Activated CD8-positive, alpha-beta T cell treated with anti-CD3 and anti-CD28 coated beads for 36 hours (primary cell): ENCODE measurements at regions of chr11 and their contacts with region 1.

Region 1: DNA sequence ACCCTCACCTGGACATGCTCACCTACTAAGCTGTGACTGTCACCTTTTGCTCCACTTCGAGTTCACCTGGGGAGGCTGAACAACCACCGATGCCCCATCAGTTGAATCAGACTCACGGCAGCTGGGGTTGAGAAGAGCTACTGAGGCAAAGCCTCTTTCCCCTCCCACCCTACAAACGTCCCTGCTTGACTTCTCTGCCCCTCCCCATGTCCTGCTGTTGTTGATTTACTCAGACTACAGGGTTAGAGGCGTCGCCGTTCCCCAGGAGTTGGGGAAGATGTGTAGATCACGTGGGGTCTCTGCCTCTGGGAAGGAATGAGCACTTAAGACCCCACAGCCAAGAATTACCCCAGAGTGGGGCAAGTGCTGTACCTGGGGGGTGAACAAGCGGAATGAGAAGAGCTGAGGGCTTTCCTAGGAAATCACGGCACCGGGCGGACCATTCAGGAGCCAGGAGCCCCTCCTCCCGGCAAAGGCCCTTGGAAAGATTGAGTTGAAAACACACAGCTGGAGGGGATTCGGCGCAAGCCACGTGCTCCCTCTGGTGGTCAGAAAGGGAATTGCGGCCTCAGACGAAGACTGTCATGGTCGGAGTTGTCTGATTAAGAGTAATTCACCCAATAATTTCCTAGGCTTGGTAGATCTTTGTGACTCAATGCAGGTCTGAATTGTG is 7.0 kb downstream of the FXYD2 start:
- DNase-seq: peak; percentile 94
- ATAC-seq: peak; percentile 53
- H3K4me3 Mint-ChIP-seq: peak overlapping the region; percentile 63
- H3K27ac Mint-ChIP-seq: peak overlapping the region; percentile 98
- H3K4me1 Mint-ChIP-seq: peaks cover 72% of the 10 kb centered on the region
- H3K27me3 Mint-ChIP-seq: no peaks in the 10 kb centered on the region
- CTCF ChIP-seq: peak; percentile 99

Region 2: GRCh38 chr11:117459781-117460261 is 357.7 kb before region 1 on chr11:
- CTCF ChIA-PET with region 1: no interaction called
- POLR2A ChIA-PET with region 1: no interaction called
- intact Hi-C with region 1: no loop called
- DNase-seq: no peak
- ATAC-seq: no peak
- H3K4me3 Mint-ChIP-seq: no peak overlapping the region
- H3K27ac Mint-ChIP-seq: no peak overlapping the region
- H3K4me1 Mint-ChIP-seq: peaks cover 10% of the 10 kb centered on the region
- H3K27me3 Mint-ChIP-seq: peaks cover 2% of the 10 kb centered on the region
- CTCF ChIP-seq: no peak

Region 3: GRCh38 chr11:117686711-117687110 is 130.8 kb before region 1 on chr11:
- CTCF ChIA-PET with region 1: no interaction called
- POLR2A ChIA-PET with region 1: no interaction called
- intact Hi-C with region 1: no loop called
- DNase-seq: no peak
- ATAC-seq: no peak
- H3K4me3 Mint-ChIP-seq: no peak overlapping the region
- H3K27ac Mint-ChIP-seq: no peak overlapping the region
- H3K4me1 Mint-ChIP-seq: no peaks in the 10 kb centered on the region
- H3K27me3 Mint-ChIP-seq: no peaks in the 10 kb centered on the region
- CTCF ChIP-seq: no peak

Region 4: DNA sequence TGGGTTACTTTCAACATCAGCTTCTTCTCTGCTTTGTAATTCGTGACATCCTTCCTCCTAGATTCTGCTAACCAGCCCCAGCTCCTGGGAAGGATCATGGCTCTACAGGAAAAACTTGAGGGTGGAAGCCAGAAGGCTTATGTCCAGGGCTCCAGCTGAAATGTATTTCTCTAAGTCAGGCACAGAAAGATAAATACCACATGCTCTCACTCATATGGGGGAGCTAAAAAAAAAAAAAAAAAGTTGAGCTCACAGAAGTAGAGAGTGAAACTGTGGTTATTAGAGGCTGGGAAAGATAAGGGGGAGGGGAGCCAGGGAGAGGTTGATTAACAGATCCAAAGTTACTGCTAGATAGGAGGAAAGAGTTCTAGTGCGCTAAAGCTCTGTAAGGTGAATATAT is 95.4 kb before region 1 on chr11:
- CTCF ChIA-PET with region 1: no interaction called
- POLR2A ChIA-PET with region 1: no interaction called
- intact Hi-C with region 1: no loop called
- DNase-seq: no peak
- ATAC-seq: no peak
- H3K4me3 Mint-ChIP-seq: no peak overlapping the region
- H3K27ac Mint-ChIP-seq: no peak overlapping the region
- H3K4me1 Mint-ChIP-seq: no peaks in the 10 kb centered on the region
- H3K27me3 Mint-ChIP-seq: no peaks in the 10 kb centered on the region
- CTCF ChIP-seq: no peak

Region 5: GRCh38 chr11:117828611-117829368 is 11.3 kb after region 1 on chr11:
- CTCF ChIA-PET with region 1: interaction called, 39 read pairs
- POLR2A ChIA-PET with region 1: interaction called, 18 read pairs
- intact Hi-C with region 1: no loop called
- DNase-seq: peak; percentile 97
- ATAC-seq: peak; percentile 89
- H3K4me3 Mint-ChIP-seq: peak overlapping the region; percentile 42
- H3K27ac Mint-ChIP-seq: peak overlapping the region; percentile 77
- H3K4me1 Mint-ChIP-seq: peaks cover 68% of the 10 kb centered on the region
- H3K27me3 Mint-ChIP-seq: no peaks in the 10 kb centered on the region
- CTCF ChIP-seq: no peak

Region 6: DNA sequence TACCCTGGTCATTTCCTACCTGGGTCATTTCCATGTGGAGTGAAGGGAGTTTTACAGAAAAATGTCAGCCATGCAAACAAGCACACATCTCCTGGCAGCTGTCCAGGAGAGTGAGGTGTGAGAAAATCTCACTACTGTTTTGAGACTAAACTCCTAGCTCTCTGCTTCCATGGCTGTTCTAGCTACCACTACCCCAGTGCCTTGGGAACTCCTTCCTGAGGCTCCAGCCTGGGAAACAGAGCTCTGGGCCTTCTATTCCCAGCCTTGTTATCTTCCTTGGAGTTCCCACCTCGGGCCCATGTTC is 114.5 kb after region 1 on chr11:
- CTCF ChIA-PET with region 1: interaction called, 11 read pairs
- POLR2A ChIA-PET with region 1: interaction called, 4 read pairs
- intact Hi-C with region 1: no loop called
- DNase-seq: peak; percentile 91
- ATAC-seq: peak; percentile 35
- H3K4me3 Mint-ChIP-seq: peak overlapping the region; percentile 24
- H3K27ac Mint-ChIP-seq: peak overlapping the region; percentile 98
- H3K4me1 Mint-ChIP-seq: peaks cover 84% of the 10 kb centered on the region
- H3K27me3 Mint-ChIP-seq: no peaks in the 10 kb centered on the region
- CTCF ChIP-seq: no peak

Region 7: DNA sequence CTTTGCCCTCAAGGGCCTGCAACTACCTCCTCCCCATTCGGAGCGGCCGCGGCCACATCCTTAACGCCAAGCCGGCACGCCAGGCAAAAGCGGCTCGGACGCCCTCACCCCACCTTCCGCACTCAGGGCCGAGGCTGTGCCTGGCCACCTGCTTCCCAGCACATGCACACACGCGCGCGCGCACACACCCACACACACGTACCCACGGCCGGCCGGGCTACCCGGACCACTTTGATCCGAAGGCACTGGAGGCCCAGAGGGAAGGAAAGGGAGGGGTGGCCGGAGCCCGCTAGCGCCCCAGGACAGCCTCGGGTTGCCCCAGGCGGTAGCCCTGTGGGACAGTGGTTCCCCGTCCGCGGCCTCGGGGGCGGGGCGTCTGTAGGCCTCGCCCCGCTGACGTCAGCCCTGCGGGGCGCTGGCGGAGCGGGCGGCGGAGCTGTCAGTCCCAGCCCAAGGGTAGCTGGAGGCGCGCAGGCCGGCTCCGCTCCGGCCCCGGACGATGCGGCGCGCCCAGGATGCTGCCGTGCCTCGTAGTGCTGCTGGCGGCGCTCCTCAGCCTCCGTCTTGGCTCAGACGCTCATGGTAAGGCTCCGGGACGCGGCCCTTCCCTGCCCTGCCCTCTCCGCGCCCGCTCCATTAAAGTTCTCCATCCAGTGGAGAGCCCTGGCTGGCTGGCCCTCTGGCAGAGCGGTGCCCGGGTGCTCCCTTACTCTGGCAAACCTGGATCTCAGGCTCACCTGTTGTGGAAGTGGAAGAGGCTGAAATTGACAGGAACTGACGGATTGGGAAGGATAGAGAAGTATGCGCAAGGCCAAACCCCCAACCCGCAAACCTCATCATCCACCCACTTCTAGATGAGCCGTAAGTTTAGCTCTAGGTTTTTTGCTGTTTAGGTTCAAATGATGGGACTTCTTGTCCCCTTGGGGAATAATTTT is 168.7 kb after region 1 on chr11 and contains the start of gene IL10RA:
- CTCF ChIA-PET with region 1: interaction called, 11 read pairs
- POLR2A ChIA-PET with region 1: interaction called, 3 read pairs
- intact Hi-C with region 1: no loop called
- DNase-seq: peak; percentile 89
- ATAC-seq: peak; percentile 85
- H3K4me3 Mint-ChIP-seq: peak within 1 kb of the TSS; percentile 80
- H3K27ac Mint-ChIP-seq: peak within 1 kb of the TSS; percentile 97
- H3K4me1 Mint-ChIP-seq: peaks cover 74% of the 10 kb centered on the region
- H3K27me3 Mint-ChIP-seq: no peaks in the 10 kb centered on the region
- CTCF ChIP-seq: no peak
- total RNA-seq, gene IL10RA: 73.3 to 80.9 TPM